ENCODE measurements at regions of chr14 and their contacts with region 1.

Region 1: DNA sequence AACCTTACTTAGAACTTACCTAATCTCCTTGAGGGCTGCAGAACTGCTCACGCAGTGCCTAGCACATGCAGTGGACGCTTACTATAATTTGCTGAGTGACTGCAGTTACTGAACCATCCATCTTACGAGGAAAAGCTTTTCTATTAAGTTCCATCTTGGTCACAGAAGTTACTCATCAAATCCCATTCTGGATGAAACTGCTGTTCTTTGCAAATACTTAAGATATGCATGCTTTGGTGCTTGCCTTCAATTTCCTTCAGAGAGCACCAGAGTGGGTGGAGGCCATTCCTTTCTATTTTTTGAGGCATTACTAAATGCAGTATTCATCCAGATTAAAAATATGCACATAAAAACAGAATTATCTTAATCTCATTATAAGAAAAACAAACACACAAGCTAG is 17.7 kb upstream of the PELI2 start:
- DNase-seq: no peak
- H3K4me3 ChIP-seq: no peak overlapping the region
- CTCF ChIP-seq: no peak
- POLR2A ChIP-seq: no peak

Region 2: GRCh38 chr14:56891226-56891625 is 790.7 kb after region 1 on chr14:
- intact Hi-C with region 1: loop called (anchors 5 kb)
- DNase-seq: no peak
- H3K4me3 ChIP-seq: no peak overlapping the region
- CTCF ChIP-seq: no peak
- POLR2A ChIP-seq: no peak